ENCODE measurements at regions of chr6 and their contacts with region 1.

Region 1: GRCh38 chr6:111625461-111626391 is 20.0 kb upstream of the TRAF3IP2 start:
- DNase-seq: no peak
- CTCF ChIP-seq: no peak

Region 2: GRCh38 chr6:111605100-111605751 is 20.5 kb before region 1 on chr6:
- CTCF ChIA-PET with region 1: interaction called, 10 read pairs
- POLR2A ChIA-PET with region 1: no interaction called
- DNase-seq: peak; percentile 48
- CTCF ChIP-seq: no peak

Measured in GM10248 (cell line).